Activated B cell treated with CpG ODN at 0.5 μM for 24 hours (primary cell): ENCODE measurements at regions of chrX and their contacts with region 1.

Region 1: DNA sequence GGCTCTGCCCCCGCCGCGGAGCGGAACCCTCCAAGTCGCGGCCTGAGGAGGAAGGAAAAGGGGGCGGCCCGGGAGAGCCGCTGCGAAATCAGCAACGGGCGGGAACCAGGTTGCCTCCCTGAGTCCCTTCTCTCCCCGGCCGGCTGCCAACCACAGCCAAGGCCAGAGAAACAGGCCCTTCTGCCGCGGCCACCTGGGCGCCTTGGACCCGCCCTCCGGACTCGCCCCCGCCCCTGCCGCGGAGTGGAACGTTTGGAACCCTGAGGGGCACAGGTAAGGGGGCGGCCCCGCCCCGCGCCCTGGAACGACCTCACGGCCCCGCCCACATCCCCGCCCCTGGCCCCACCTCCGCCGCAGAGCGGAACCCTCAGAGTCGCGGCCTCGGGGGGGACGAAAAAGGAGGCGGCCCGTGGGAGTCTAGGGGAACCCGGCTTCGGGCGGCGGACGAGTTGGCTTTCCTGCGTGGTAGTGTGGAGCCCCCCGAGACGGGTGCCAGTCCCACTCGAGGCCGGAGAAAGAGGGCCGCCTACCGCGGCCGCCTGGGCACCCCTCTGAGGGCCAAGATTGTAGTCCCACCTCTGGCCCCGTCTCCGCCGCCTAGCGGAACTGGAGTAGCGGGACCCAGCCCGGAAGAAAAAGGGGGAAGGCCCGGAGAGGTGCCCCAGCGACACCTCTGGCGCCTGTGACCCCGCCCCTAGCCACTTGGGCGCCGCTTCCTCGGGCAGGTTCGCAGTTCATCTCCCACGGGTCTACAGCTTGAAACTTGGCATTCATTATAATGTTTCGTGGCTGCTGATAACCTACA is 669 bp upstream of the PHKA2 start:
- DNase-seq: peak; percentile 72
- ATAC-seq: peak; percentile 86
- H3K4me3 Mint-ChIP-seq: peak overlapping the region; percentile 87
- H3K27ac Mint-ChIP-seq: peak overlapping the region; percentile 89
- H3K4me1 Mint-ChIP-seq: peaks cover 15% of the 10 kb centered on the region
- H3K27me3 Mint-ChIP-seq: no peaks in the 10 kb centered on the region
- CTCF ChIP-seq: no peak

Region 2: GRCh38 chrX:17736856-17737706 is 1247.5 kb before region 1 on chrX and contains the start of gene SCML1:
- CTCF ChIA-PET with region 1: no interaction called
- POLR2A ChIA-PET with region 1: no interaction called
- intact Hi-C with region 1: loop called (anchors 5 kb)
- DNase-seq: peak; percentile 66
- ATAC-seq: peak; percentile 88
- H3K4me3 Mint-ChIP-seq: peak within 1 kb of the TSS; percentile 84
- H3K27ac Mint-ChIP-seq: peak within 1 kb of the TSS; percentile 74
- H3K4me1 Mint-ChIP-seq: peaks cover 15% of the 10 kb centered on the region
- H3K27me3 Mint-ChIP-seq: no peaks in the 10 kb centered on the region
- CTCF ChIP-seq: no peak
- total RNA-seq, gene SCML1: 6.4 and 6.5 TPM in 2 replicates

Region 3: DNA sequence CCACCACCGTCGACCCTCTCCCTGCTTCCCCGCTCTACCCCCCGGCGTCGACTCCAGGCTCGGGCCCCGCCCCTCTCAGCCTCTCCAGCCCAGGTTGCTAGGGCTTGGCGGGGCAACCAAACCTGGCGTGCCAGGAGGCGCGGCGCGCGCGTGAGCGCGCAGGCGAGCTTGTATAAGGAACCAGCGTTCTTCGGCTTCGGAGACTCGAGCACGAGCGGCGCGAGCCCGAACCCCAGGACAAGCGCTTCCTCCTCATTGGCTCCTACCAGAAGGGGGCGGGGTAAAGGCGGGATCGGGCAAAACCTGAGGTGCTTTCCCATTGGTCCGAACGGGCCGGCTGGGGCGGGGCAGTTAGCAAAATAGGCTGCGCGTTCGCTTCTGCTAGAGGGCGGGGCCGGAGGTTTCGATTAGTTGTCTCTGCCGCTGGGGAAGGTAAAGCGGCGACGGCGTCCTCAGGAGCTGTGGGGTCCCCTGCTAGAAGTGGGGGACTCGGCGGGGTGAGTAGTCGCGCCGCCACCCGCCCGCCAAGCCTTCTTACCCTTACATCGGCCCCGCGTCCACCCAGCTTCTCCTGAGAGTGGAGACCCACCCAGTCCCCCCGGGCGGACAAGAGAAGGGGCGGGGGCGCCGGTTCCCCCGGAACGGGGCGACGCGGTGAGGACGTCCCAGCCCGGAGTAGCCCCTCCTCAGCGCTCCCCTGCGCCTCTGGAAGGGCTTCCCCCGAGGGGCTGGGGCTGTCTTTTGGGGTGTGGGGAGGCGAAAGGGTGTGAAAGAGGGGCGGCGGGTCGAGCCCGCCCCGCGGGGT is 559.2 kb before region 1 on chrX and contains the start of gene CDKL5:
- CTCF ChIA-PET with region 1: no interaction called
- POLR2A ChIA-PET with region 1: no interaction called
- intact Hi-C with region 1: loop called (anchors 1 kb)
- DNase-seq: peak; percentile 82
- ATAC-seq: peak; percentile 93
- H3K4me3 Mint-ChIP-seq: peak within 1 kb of the TSS; percentile 86
- H3K27ac Mint-ChIP-seq: peak within 1 kb of the TSS; percentile 77
- H3K4me1 Mint-ChIP-seq: peaks cover 16% of the 10 kb centered on the region
- H3K27me3 Mint-ChIP-seq: no peaks in the 10 kb centered on the region
- CTCF ChIP-seq: no peak
- total RNA-seq, gene CDKL5: 3.7 and 3.8 TPM in 2 replicates

Region 4: DNA sequence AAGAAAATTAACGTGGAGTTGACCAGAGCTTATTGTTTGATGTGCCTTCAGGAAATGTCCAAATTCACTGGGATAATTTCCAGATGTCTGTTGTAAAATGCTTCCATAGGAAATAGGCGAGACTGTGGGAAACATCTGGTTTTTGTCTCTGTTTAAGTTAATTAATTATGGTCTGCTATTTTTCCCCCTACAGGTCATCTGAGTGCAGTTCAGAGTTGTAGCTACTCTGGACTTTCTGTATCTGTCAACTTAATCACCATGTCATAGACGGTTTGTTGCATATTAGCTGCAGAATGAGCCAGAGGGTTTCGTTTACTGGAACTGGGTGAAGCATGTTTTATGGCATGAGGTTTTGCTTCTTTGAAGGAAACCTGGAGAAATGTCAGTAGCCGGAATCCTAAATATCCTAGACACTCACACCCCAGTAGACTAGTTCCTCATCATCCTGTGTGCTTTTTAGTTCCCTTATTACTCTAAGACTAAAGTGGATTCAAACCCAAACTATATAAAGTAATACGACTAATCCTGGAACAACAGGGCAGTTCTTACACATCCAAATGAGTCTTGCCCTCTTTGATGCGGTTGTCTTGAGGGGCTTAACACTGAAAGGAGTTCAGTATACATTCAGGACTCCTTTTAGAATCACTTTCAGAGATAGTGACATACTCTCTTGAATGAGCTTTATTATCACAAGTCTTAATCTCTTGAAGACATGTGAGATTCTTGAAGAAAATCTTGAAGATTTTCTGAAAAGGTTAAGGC is 214.6 kb before region 1 on chrX:
- CTCF ChIA-PET with region 1: no interaction called
- POLR2A ChIA-PET with region 1: no interaction called
- intact Hi-C with region 1: no loop called
- DNase-seq: no peak
- ATAC-seq: no peak
- H3K4me3 Mint-ChIP-seq: no peak overlapping the region
- H3K27ac Mint-ChIP-seq: no peak overlapping the region
- H3K4me1 Mint-ChIP-seq: no peaks in the 10 kb centered on the region
- H3K27me3 Mint-ChIP-seq: no peaks in the 10 kb centered on the region
- CTCF ChIP-seq: no peak

Region 5: GRCh38 chrX:18855919-18856644 is 128.5 kb before region 1 on chrX:
- CTCF ChIA-PET with region 1: no interaction called
- POLR2A ChIA-PET with region 1: no interaction called
- intact Hi-C with region 1: no loop called
- DNase-seq: no peak
- ATAC-seq: no peak
- H3K4me3 Mint-ChIP-seq: no peak overlapping the region
- H3K27ac Mint-ChIP-seq: no peak overlapping the region
- H3K4me1 Mint-ChIP-seq: peaks cover 8% of the 10 kb centered on the region
- H3K27me3 Mint-ChIP-seq: no peaks in the 10 kb centered on the region
- CTCF ChIP-seq: no peak

Region 6: DNA sequence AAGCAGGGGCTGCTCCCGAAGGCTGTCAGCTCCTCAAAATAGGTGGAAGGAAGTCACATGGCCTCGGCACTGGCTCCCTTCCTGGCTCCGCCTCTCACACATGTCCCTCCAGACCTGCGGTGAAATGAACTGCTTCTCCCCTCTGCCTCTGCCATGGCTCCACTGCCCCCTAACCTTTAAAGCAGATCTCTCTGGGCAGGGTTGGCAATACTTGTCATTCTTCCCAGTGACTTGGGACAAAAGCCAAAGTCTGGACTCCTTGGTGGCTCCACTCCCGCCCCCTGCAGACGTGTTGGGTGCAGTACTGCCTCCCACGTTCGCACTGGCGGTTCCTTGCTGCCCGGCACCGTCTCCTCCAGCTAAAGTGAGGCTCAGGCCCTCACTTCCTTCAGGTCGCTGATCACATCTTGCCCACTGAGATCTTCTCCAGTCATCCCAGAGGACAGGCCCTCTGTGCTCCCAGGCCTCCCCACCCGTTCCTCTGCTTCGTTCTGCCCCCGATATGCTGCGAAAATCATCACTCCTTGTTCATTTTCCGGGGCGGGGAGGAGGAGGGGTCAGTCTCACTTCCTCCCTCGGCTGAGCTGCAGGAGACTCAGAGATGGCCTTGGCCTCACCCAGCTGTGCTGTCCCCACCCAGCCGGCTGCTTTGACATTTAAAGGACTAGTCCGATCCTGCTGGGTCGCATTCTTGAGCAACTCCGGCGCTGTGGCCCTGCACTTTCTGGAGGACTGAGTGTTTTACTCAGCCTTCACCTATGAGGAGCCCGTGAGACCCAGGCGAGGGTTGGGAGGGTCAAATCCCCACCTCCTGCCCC is 98.0 kb before region 1 on chrX:
- CTCF ChIA-PET with region 1: interaction called, 4 read pairs
- POLR2A ChIA-PET with region 1: interaction called, 6 read pairs
- intact Hi-C with region 1: loop called (anchors 1 kb)
- DNase-seq: peak; percentile 36
- ATAC-seq: peak; percentile 81
- H3K4me3 Mint-ChIP-seq: peak overlapping the region; percentile 91
- H3K27ac Mint-ChIP-seq: peak overlapping the region; percentile 94
- H3K4me1 Mint-ChIP-seq: peaks cover 25% of the 10 kb centered on the region
- H3K27me3 Mint-ChIP-seq: no peaks in the 10 kb centered on the region
- CTCF ChIP-seq: no peak

Region 7: GRCh38 chrX:19990556-19991349 is 1006.2 kb after region 1 on chrX and contains the start of gene BCLAF3:
- CTCF ChIA-PET with region 1: no interaction called
- POLR2A ChIA-PET with region 1: no interaction called
- intact Hi-C with region 1: loop called (anchors 2 kb)
- DNase-seq: peak; percentile 83
- ATAC-seq: peak; percentile 92
- H3K4me3 Mint-ChIP-seq: peak within 1 kb of the TSS; percentile 86
- H3K27ac Mint-ChIP-seq: peak within 1 kb of the TSS; percentile 85
- H3K4me1 Mint-ChIP-seq: peaks cover 16% of the 10 kb centered on the region
- H3K27me3 Mint-ChIP-seq: no peaks in the 10 kb centered on the region
- CTCF ChIP-seq: no peak
- total RNA-seq, gene BCLAF3: 11.6 and 15.3 TPM in 2 replicates